Activated CD4-positive, alpha-beta memory T cell treated with anti-CD3 and anti-CD28 coated beads, Interleukin-2, amount 10 ng/mL, durations not matched to agents 7 days and 5 days (primary cell): ENCODE measurements at regions of chr17 and their contacts with region 1.

Region 1: DNA sequence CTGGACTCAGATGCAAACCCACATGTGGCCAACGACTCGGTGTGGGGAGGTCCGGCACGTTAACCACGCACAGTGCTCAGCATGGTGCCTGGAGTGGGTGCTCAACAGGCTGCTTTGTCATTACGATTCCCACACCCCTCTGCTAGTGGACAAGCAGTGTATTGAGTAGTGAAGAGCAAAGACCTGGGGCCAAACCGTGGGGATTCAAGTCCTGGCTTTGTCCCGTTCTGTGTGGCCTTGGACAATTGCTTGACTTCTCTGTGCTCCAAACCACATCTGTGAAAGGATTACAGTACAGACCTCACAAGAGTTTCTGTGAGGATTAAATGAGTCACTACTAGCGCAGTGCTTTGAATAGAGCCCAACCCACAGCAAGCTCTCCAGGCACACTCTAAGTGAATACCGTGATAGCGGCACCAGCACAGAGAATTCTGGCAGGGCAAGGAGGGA is 33.8 kb downstream of the TRPV2 start:
- DNase-seq: no peak
- H3K4me3 Mint-ChIP-seq: no peak overlapping the region
- H3K27ac Mint-ChIP-seq: no peak overlapping the region
- H3K4me1 Mint-ChIP-seq: peaks cover 21% of the 10 kb centered on the region
- H3K27me3 Mint-ChIP-seq: no peaks in the 10 kb centered on the region

Region 2: DNA sequence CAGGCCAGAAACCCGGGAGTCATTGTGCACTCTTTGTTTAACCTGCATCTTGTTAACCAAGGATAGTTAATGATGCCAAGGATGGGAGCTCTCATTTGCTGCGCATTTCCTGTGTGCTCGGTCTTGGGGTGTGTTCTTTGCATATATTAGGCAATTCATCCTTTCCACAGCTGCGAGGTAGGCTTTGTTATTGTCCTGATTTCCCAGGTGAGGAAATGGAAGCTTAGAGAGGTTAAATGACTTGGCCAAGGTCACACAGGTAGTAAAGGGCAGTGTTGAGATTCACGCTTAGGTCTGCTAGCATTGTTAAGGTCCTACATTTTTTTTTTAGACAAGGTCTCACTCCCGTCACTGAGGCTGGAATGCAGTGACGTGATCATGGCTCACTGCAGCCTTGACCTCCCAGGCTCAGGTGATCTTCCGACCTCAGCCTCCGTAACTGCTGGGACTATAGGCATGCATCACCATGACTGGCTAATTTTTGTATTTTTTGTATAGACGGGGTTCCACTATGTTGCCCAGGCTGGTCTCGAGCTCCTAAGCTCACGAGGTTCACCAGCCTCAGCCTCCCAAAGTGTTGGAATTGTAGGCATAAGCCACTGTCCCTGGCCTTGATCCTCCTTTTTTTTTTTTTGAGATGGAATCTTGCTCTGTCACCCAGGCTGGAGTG is 47.8 kb after region 1 on chr17:
- CTCF ChIA-PET with region 1: no interaction called
- POLR2A ChIA-PET with region 1: no interaction called
- DNase-seq: no peak
- H3K4me3 Mint-ChIP-seq: no peak overlapping the region
- H3K27ac Mint-ChIP-seq: no peak overlapping the region
- H3K4me1 Mint-ChIP-seq: peaks cover 2% of the 10 kb centered on the region
- H3K27me3 Mint-ChIP-seq: peaks cover 40% of the 10 kb centered on the region

Region 3: GRCh38 chr17:16521070-16521727 is 72.1 kb after region 1 on chr17:
- CTCF ChIA-PET with region 1: interaction called, 54 read pairs
- POLR2A ChIA-PET with region 1: interaction called, 5 read pairs
- DNase-seq: peak; percentile 69
- H3K4me3 Mint-ChIP-seq: no peak overlapping the region
- H3K27ac Mint-ChIP-seq: no peak overlapping the region
- H3K4me1 Mint-ChIP-seq: peaks cover 4% of the 10 kb centered on the region
- H3K27me3 Mint-ChIP-seq: peaks cover 29% of the 10 kb centered on the region